Mammary epithelial cell (primary cell): ENCODE measurements at regions of chr13 and their contacts with region 1.

Region 1: GRCh38 chr13:51797664-51798488 is 6.1 kb downstream of the DHRS12 start:
- DNase-seq: peak; percentile 74
- H3K4me3 ChIP-seq: no peak overlapping the region
- H3K27ac ChIP-seq: no peak overlapping the region
- H3K4me1 ChIP-seq: peaks cover 25% of the 10 kb centered on the region
- H3K27me3 ChIP-seq: no peaks in the 10 kb centered on the region
- CTCF ChIP-seq: peak; percentile 49 to 71

Region 2: DNA sequence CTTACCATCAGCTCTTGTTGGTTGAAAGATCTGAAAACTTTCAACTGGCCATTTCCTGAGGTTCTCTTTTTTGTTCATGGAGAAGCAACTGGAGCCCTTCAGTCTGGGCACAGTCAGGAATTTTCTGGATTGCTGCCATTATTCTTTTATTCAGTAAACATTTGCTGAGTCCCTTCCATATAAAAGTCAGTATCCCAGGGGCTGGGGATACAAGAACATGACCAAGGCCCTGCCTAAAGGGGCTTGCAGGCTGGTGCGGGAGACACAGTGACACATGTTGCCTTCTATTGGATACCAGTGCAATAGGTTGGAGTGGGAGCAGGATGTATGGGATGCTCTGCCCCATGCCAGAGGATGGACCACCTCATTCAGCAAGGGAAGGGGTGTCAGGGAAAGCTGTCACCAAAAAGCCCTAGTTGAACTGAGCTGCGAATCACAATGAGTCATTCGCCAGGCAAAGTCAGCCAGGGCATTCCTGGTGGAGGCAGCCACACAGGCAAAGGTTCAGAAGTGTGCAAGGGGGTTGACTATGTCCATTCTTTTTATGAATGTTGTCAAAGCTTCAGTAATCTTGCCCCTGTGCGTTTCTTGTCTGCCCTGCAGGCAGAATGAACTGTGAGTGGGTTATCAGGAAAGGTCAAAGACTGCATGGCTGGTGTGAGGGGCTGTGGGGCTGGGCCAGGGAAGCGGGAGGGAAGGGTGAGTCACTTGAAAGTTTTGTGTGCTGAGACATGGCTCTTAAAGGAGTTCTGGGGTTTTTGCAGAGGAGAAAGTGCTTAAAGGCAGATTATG is 1386.8 kb before region 1 on chr13:
- CTCF ChIA-PET with region 1: no interaction called
- dilution Hi-C with region 1: no loop called
- in situ Hi-C with region 1: no loop called
- intact Hi-C with region 1: no loop called
- DNase-seq: peak; percentile 89
- H3K4me3 ChIP-seq: no peak overlapping the region
- H3K27ac ChIP-seq: peak overlapping the region; percentile 14
- H3K4me1 ChIP-seq: peaks cover 19% of the 10 kb centered on the region
- H3K27me3 ChIP-seq: no peaks in the 10 kb centered on the region
- CTCF ChIP-seq: no peak

Region 3: GRCh38 chr13:51125498-51126226 is 672.2 kb before region 1 on chr13:
- CTCF ChIA-PET with region 1: interaction called, 23 read pairs
- dilution Hi-C with region 1: no loop called
- in situ Hi-C with region 1: loop called (anchors 10 kb)
- intact Hi-C with region 1: loop called (anchors 1 kb)
- DNase-seq: peak; percentile 22
- H3K4me3 ChIP-seq: no peak overlapping the region
- H3K27ac ChIP-seq: no peak overlapping the region
- H3K4me1 ChIP-seq: no peaks in the 10 kb centered on the region
- H3K27me3 ChIP-seq: no peaks in the 10 kb centered on the region
- CTCF ChIP-seq: peak; percentile 84 to 89

Region 4: GRCh38 chr13:51148952-51149573 is 648.8 kb before region 1 on chr13:
- CTCF ChIA-PET with region 1: interaction called, 7 read pairs
- dilution Hi-C with region 1: no loop called
- in situ Hi-C with region 1: no loop called
- intact Hi-C with region 1: loop called (anchors 1 kb)
- DNase-seq: peak; percentile 8
- H3K4me3 ChIP-seq: no peak overlapping the region
- H3K27ac ChIP-seq: no peak overlapping the region
- H3K4me1 ChIP-seq: no peaks in the 10 kb centered on the region
- H3K27me3 ChIP-seq: peaks cover 2% of the 10 kb centered on the region
- CTCF ChIP-seq: peak; percentile 49 to 69

Region 5: DNA sequence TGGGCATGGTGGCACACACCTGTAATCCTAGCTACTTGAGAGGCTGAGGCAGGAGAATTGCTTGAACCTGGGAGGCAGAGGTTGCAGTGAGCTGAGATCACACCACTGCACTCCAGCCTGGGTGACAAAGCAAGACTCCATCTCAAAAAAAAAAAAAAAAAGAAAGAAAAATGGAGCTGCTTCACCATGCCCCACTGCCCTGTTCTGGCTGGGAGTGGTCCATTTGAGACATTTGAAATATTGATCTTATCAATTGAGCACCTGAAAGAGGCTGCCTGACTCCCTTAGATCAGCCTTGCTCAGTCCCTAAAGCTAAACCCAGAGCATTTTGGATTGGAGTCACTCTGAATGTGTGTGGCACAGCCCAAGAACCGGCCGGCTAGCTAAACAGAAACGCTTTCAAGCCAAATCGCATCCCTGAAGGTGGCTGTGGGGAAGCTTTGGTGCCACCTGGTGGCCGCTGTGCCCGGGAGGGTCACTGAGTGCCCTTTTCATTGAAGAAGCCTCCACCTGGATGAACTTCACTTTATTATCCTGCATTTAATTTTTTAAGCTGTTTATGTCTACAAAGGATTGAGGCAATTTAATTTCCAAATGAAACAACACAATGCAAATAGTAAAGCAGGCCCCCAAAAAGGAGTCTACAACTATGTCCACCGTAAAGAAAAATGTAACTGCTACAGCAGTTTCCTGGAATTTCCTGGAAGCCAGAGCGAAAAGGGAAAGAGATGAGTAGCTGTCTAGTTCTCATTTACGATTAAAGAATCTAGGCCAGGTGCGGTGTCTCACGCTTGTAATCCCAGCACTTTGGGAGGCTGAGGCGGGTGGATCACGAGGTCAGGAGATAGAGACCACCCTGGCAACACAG is 511.5 kb before region 1 on chr13:
- CTCF ChIA-PET with region 1: interaction called, 7 read pairs
- dilution Hi-C with region 1: no loop called
- in situ Hi-C with region 1: no loop called
- intact Hi-C with region 1: loop called (anchors 1 kb)
- DNase-seq: peak; percentile 43
- H3K4me3 ChIP-seq: no peak overlapping the region
- H3K27ac ChIP-seq: no peak overlapping the region
- H3K4me1 ChIP-seq: no peaks in the 10 kb centered on the region
- H3K27me3 ChIP-seq: no peaks in the 10 kb centered on the region
- CTCF ChIP-seq: peak; percentile 98

Region 6: GRCh38 chr13:51370116-51370515 is 427.8 kb before region 1 on chr13:
- CTCF ChIA-PET with region 1: no interaction called
- dilution Hi-C with region 1: no loop called
- in situ Hi-C with region 1: no loop called
- intact Hi-C with region 1: no loop called
- DNase-seq: no peak
- H3K4me3 ChIP-seq: no peak overlapping the region
- H3K27ac ChIP-seq: no peak overlapping the region
- H3K4me1 ChIP-seq: no peaks in the 10 kb centered on the region
- H3K27me3 ChIP-seq: no peaks in the 10 kb centered on the region
- CTCF ChIP-seq: no peak

Region 7: DNA sequence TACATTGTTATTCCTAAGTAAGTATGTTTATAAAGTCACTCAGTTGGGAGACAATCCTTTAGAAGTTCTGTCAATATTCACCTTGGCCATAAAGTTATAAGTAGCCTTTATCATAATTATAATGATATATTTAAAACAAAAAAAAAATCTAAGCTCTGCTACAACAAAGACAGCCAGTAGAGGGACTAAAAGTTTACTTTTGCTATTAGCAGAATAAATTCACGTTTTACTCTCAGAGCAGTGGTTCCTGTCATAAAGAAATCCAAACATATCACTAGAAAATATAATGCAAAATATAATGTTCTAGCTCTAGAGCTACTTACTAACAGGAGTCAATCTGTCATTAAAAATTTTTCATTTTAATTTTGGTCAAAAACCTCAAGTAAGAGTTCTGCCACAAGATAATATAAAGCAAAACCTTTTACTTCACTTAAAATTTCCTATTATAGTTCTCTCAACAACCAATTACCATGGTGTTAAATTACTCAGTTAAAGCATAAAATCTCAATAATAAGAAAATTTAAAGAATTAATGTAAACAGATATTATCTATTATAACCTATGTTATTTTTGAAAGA is 362.8 kb before region 1 on chr13:
- CTCF ChIA-PET with region 1: interaction called, 5 read pairs
- dilution Hi-C with region 1: loop called (anchors 25 kb)
- in situ Hi-C with region 1: loop called (anchors 10 kb)
- intact Hi-C with region 1: loop called (anchors 2 kb)
- DNase-seq: no peak
- H3K4me3 ChIP-seq: no peak overlapping the region
- H3K27ac ChIP-seq: no peak overlapping the region
- H3K4me1 ChIP-seq: no peaks in the 10 kb centered on the region
- H3K27me3 ChIP-seq: no peaks in the 10 kb centered on the region
- CTCF ChIP-seq: peak; percentile 53 to 60

Region 8: GRCh38 chr13:51452361-51453206 is 345.3 kb before region 1 on chr13 and contains the start of gene INTS6:
- CTCF ChIA-PET with region 1: no interaction called
- dilution Hi-C with region 1: loop called (anchors 25 kb)
- in situ Hi-C with region 1: loop called (anchors 10 kb)
- intact Hi-C with region 1: loop called (anchors 1 kb)
- DNase-seq: peak; percentile 99
- H3K4me3 ChIP-seq: peak within 1 kb of the TSS; percentile 73 to 94 (median 89)
- H3K27ac ChIP-seq: peak within 1 kb of the TSS; percentile 86
- H3K4me1 ChIP-seq: peaks cover 4% of the 10 kb centered on the region
- H3K27me3 ChIP-seq: no peaks in the 10 kb centered on the region
- CTCF ChIP-seq: no peak
- total RNA-seq, gene INTS6: 57.8 to 65.7 TPM

Region 9: DNA sequence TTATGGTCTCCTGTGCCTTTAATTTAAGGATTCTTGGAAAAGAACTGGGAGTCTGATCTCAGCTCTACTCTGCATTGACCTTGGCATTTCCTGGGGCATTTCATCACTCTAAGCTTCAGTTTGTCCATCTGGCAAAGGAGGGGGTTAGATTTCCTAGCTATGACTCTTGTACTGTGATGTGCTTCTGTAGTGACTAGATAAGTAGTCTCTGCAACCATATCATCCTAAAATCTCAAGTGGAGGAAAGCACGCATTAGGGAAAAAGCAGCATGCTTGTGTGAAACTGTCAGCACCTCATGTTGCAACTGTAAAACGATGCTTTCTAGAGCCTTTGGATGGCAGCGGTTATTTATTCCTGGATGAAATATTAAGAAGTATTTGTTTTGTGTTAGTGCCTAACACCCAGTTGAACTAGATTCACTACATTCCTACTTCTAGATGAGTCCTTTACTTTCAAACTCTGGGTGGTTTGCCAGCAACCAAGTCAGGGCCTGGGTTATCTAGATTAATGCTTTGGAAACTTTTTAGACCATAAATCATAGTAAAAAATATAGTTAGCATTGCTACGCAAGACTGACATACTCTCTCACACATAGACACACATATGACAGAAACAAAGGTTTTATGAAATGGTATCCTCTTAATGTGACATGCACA is 206.8 kb before region 1 on chr13:
- CTCF ChIA-PET with region 1: interaction called, 4 read pairs
- dilution Hi-C with region 1: no loop called
- in situ Hi-C with region 1: no loop called
- intact Hi-C with region 1: loop called (anchors 1 kb)
- DNase-seq: peak; percentile 68
- H3K4me3 ChIP-seq: peak overlapping the region in 1 of 3 experiments; percentile 2
- H3K27ac ChIP-seq: peak overlapping the region; percentile 27
- H3K4me1 ChIP-seq: peaks cover 28% of the 10 kb centered on the region
- H3K27me3 ChIP-seq: no peaks in the 10 kb centered on the region
- CTCF ChIP-seq: peak in 1 of 2 donors; percentile 23

Region 10: GRCh38 chr13:51714663-51715168 is 83.2 kb before region 1 on chr13:
- CTCF ChIA-PET with region 1: no interaction called
- dilution Hi-C with region 1: no loop called
- in situ Hi-C with region 1: no loop called
- intact Hi-C with region 1: no loop called
- DNase-seq: peak; percentile 88
- H3K4me3 ChIP-seq: no peak overlapping the region
- H3K27ac ChIP-seq: peak overlapping the region; percentile 97
- H3K4me1 ChIP-seq: peaks cover 25% of the 10 kb centered on the region
- H3K27me3 ChIP-seq: no peaks in the 10 kb centered on the region
- CTCF ChIP-seq: no peak

Region 11: GRCh38 chr13:52034616-52035226 is 236.8 kb after region 1 on chr13:
- CTCF ChIA-PET with region 1: no interaction called
- dilution Hi-C with region 1: no loop called
- in situ Hi-C with region 1: no loop called
- intact Hi-C with region 1: no loop called
- DNase-seq: no peak
- H3K4me3 ChIP-seq: no peak overlapping the region
- H3K27ac ChIP-seq: no peak overlapping the region
- H3K4me1 ChIP-seq: no peaks in the 10 kb centered on the region
- H3K27me3 ChIP-seq: no peaks in the 10 kb centered on the region
- CTCF ChIP-seq: no peak